RWPE1 (cell line): ENCODE measurements at regions of chr10 and their contacts with region 1.

Region 1: GRCh38 chr10:12834116-12834515 is 167.4 kb downstream of the CCDC3 start:
- DNase-seq: no peak
- H3K27ac ChIP-seq: peak overlapping the region; percentile 83
- CTCF ChIP-seq: no peak

Region 2: DNA sequence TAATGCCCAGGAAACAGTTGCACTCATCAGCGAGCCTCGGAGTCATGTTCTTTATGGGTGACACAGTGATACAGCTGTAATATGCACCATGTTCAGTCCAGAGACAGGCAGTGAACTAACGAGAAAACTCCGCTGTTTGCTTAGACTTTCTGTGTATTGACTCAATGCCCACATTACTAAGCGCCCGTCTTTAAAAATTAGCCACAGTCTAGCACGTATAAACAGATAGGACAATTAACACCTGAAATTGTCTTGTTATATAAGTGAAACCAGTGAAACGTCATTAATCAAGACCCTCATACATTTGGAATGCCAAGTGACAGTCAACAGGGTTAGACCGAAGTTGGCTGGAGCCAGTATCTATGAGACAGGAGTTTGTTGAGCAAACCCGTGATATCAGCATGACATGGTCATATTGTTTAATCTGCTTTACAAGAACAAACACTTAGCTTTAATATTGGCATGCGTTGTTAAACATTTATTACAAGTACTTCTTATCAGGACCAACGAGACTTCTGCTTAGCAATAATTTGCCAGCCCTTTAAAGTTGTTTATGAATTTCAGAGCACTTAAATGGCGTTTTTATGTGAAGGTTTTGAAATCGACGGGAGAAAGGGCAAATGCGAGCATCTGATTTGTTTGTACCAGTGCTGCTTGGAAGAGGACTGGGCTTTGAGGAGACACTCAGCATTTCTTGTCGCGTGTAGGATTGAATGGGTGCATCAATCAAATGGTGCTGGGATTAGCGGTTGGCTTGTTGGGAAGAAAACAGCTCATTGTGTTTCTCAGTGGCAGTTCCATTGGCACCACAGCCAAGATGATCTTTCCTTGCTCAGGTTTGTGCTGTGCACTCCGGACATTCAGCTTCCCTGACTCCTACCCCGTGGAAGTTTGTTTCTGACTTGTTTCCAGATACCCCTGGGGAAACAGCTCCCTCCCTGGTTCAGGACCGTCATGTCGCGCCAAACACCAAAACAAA is 428.5 kb before region 1 on chr10:
- CTCF ChIA-PET with region 1: no interaction called
- POLR2A ChIA-PET with region 1: no interaction called
- DNase-seq: no peak
- H3K27ac ChIP-seq: no peak overlapping the region
- CTCF ChIP-seq: no peak

Region 3: DNA sequence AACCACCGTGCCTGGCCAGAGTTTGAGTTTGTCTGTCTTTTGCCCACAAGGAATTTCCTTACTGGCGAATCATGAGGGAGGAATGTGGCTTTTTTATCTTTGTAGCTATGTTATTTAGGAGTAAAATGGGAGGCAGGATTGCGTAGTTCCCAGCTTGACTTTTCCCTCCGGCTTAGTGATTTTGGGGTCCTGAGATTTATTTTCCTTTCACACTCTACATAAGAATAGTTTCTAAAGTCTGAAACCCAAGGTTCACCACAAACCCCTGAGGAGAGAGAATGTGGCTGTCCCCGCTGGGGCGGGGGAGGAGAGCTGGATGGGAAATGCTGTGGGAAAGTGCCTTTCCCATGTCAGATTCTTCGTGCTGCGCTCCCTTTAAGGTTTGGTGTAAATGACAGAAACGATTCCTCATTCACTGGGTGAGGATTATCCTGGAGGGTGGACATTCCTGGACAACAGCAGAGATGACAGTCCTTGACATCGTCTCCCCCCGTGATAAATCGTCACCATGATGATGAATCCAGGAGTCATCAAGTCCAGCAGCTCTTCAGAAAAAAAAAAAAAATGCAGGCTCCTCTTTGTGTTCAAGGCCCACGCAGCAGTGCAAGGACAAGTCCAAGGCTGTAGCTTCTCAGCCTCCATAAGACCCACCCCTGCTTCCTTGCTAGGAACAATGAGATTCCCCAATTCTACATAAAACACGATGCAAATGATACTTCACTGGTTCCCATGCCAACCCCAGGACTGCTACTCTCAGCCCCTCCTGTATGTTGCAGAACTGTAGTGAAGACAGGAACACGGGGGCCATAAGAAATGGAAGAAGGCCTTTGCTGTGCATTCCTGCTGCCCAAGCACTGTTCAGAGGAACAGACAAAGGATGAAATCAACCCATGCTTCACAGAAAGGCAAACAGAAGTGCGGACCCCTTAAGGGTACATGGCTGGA is 65.7 kb before region 1 on chr10:
- CTCF ChIA-PET with region 1: no interaction called
- POLR2A ChIA-PET with region 1: no interaction called
- DNase-seq: no peak
- H3K27ac ChIP-seq: no peak overlapping the region
- CTCF ChIP-seq: no peak

Region 4: DNA sequence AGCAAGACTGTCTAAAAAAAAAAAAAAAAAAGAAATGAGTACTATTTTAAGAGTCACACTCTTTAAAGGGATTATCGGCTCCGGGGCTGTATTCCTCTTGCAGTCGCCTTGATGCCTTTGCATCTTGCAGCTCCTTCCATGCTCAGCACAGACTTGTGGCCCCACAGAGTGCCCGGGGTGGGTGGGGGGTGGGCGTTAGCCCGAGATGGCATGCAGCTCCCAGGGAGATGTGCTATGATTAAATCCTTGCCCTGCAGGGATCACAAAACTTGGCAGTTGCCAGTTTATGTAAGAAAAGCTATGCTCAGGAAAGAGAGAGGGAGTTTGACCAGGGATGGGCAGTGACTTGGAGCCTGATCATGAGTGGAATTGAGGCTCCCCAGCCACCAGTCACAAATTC is 85.5 kb after region 1 on chr10:
- CTCF ChIA-PET with region 1: no interaction called
- POLR2A ChIA-PET with region 1: interaction called, 16 read pairs
- DNase-seq: no peak
- H3K27ac ChIP-seq: no peak overlapping the region
- CTCF ChIP-seq: no peak